ENCODE measurements at regions of chr17 and their contacts with region 1.

Region 1: DNA sequence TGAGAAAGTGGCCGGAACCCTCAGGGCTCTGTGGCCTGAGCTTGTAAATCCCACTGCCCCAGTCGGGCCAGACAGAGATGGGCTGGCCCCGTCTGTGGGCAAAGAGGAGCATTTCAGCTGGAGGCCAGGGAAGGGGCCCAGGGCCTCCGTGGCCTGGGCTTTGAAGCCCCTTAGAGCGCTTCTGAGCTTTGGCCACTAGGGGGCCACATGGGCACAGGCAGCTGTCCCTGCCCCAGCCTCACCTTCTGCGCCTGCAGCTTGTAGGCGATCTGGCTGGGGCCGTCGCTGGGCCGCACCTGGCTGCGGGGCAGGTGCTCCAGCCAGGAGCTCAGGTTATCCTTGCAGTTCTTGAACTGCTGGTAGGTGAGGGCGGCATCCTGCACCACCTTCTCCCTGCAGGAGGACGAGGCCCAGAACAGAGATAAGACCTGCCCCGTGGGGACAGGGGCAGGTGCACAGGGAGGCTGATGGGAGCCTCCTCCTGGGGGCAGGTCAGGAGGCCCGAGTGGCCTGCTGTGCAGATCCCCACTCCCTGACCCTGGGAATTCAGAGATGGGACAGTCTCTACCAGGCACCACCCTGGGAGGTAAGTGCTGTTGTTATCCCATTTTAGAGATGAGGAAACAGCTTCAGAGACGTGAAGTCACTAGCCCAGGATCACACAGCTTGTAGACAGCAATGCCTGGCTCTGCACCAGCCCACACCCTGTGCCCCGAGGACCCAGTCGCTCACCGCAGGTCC is 12.8 kb downstream of the EVPL start:
- DNase-seq: no peak
- H3K4me3 ChIP-seq: no peak overlapping the region
- H3K27me3 ChIP-seq: peaks cover 1% of the 10 kb centered on the region; the same call in 1 of the 2 replicates
- CTCF ChIP-seq: peak; percentile 99

Region 2: DNA sequence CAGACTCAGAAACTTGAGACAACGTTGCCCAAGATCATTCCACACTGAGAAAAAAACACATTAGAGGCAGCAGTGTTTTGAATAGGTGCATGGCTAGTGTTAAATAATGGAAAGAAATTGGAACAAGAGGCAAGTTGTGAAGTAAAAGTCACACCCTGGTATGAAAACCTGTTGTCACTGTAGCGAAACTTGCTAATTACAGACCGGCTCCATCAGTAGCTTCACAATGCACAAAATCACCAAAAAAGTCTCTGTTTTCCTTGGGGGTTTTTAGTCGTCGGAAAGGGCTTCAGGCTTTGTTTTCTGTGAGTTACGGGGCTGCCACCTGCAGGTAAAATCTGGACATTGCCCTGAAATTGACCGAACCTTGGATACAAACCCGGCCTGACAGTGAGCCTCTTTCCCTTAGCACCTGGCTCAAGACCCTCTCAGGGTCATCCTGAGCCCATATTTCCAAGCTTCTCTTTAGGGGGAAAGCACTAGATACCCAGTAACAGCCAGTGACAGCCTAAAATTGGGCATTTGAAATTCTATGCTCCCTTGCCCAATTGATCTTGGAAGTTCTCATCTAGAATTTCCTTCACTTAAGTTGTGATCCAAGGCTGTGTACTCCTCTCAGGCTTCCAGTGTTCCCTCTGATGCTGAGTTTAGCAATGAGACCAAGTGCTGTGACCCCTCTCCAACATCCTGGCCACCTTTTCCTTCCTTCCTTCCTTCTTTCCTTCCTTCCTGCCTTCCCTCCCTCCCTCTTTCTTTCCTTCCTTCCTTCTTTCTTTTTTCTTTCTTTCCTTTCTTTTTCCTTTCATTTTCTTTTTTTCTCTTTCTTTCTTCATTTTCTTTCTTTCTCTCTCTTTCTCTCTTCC is 601.7 kb before region 1 on chr17:
- CTCF ChIA-PET with region 1: no interaction called
- POLR2A ChIA-PET with region 1: no interaction called
- DNase-seq: no peak
- H3K4me3 ChIP-seq: no peak overlapping the region
- H3K27me3 ChIP-seq: peaks cover 6% of the 10 kb centered on the region
- CTCF ChIP-seq: peak; percentile 77

Region 3: DNA sequence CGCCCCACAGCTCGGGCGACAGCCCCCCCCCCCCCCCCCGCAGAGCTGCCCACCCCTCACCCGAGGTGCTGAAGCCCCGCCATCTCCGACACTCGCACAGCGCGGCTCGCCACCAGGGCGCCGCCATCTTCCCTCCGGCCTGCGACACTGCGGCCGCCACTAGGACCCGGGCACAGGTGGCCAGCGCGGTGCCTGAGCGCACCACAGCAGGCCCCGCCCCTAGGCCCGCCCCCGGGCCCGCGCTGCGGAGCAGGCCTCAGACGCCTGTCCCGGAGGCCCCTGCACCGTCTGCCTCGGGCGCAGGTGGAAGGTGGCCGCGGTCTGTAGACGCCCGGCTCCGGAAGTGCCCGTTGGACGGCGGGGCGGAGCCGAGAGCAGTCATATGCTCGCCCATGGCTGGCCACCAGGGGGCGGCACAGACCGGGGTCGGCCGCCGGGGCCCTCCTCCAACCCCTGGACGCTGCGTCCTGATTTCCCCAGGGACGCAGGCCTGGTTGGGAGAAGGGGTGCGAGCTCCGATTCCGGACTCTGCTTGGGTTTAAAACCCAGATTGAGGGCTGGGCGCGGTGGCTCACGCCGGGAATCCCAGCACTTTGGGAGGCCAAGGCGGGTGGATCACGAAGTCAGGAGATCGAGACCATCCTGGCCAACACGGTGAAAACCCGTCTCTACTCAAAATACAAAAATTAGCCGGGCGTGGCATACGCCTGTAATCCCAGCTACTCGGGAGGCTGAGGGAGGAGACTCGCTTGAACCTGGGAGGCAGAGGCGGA is 109.4 kb before region 1 on chr17 and contains the start of gene MRPL38:
- CTCF ChIA-PET with region 1: interaction called, 264 read pairs
- POLR2A ChIA-PET with region 1: no interaction called
- DNase-seq: peak; percentile 62
- H3K4me3 ChIP-seq: peak within 1 kb of the TSS; percentile 91
- H3K27me3 ChIP-seq: no peaks in the 10 kb centered on the region
- CTCF ChIP-seq: peak; percentile 94
- polyA plus RNA-seq, gene MRPL38: 22.7 and 60.9 TPM in 2 replicates

Region 4: GRCh38 chr17:75940724-75941441 is 73.5 kb before region 1 on chr17 and contains the start of gene FBF1:
- CTCF ChIA-PET with region 1: no interaction called
- POLR2A ChIA-PET with region 1: no interaction called
- DNase-seq: peak; percentile 73
- H3K4me3 ChIP-seq: peak within 1 kb of the TSS; percentile 60
- H3K27me3 ChIP-seq: no peaks in the 10 kb centered on the region
- CTCF ChIP-seq: 0 out of 2 replicates have a peak, but pooled peaks have one; percentile 6
- polyA plus RNA-seq, gene FBF1: 3.4 and 4.8 TPM in 2 replicates

Region 5: DNA sequence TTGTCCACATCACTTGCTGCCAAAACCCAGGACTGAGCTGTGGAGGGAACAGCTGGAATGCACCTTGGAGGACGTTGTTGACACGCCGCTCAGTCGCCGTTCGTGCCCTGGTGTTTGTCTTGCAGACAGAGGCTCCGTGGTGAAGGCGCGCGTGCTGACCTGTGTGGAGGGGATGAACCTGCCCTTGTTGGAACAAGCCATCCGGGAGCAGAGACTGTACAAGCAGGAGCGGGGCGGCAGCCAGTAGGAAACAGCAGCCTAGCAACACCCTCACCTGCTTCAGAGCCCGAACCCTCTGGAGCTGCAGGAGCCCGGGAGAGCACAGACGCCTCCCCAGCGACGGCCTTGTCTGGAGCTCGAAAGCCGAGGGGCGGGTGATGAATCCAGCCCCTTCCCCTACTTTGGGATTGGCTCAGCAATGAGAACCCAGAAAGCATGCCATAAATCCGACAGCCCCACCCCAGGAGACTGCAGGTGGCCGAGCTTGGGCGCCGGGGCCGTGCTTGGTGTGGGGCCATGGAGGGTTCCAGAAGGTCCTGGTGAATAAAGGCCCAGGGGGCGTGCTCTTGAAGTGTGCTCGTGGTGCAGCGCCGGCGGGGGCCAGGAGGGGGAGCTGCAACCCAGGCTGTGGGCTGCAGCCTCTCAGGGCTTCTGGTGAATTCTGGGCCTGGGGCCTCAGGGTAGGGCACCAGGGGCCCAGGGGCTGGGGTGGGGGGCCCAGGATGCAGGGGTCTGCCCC is 14.2 kb before region 1 on chr17:
- CTCF ChIA-PET with region 1: interaction called, 81 read pairs
- POLR2A ChIA-PET with region 1: no interaction called
- DNase-seq: no peak
- H3K4me3 ChIP-seq: no peak overlapping the region
- H3K27me3 ChIP-seq: no peaks in the 10 kb centered on the region
- CTCF ChIP-seq: peak; percentile 79

Region 6: DNA sequence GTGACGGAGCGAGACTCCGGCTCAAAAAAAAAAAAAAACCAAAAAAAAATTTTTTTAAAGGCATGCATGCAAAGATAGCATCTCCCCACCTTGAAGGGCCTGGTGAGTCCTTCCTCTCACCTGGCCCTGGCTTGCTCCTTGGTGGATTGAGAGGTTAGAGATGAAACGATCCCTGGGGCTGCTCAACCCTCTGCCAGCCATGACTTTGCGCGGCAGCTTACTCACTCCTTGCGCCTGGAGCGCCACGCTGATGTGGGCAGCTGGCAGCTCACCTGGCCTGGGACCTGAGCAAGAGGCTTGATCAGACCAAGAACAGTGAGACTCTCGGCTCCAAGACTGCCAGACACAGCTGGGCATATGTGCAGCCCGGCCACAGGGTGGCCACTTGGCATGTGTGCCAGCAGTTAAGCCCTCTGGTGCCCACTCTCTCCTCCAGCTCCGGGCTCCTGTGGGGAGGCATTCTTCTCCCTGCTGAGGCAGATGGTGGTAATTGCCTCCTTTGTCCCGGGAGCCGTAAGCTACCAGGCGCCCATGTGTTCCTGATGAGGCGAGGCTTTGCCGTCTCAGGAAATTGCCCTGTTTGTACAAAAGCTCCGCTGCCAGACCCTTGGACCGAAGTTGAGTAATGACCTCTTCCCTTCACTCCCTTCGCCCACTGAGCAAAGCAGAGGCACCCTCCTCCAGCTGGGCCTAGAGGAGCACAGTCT is 17.9 kb after region 1 on chr17:
- CTCF ChIA-PET with region 1: interaction called, 49 read pairs
- POLR2A ChIA-PET with region 1: no interaction called
- DNase-seq: no peak
- H3K4me3 ChIP-seq: no peak overlapping the region
- H3K27me3 ChIP-seq: no peaks in the 10 kb centered on the region
- CTCF ChIP-seq: no peak

Region 7: GRCh38 chr17:76103274-76104139 is 89.2 kb after region 1 on chr17 and contains the start of gene EXOC7:
- CTCF ChIA-PET with region 1: interaction called, 10 read pairs
- POLR2A ChIA-PET with region 1: no interaction called
- DNase-seq: peak; percentile 39
- H3K4me3 ChIP-seq: peak within 1 kb of the TSS; percentile 98
- H3K27me3 ChIP-seq: no peaks in the 10 kb centered on the region
- CTCF ChIP-seq: peak; percentile 24; the same call in 1 of the 2 replicates
- polyA plus RNA-seq, gene EXOC7: 91.7 and 122 TPM in 2 replicates

Region 8: GRCh38 chr17:76296186-76296585 is 281.8 kb after region 1 on chr17:
- CTCF ChIA-PET with region 1: interaction called, 17 read pairs
- POLR2A ChIA-PET with region 1: no interaction called
- DNase-seq: no peak
- H3K4me3 ChIP-seq: no peak overlapping the region
- H3K27me3 ChIP-seq: no peaks in the 10 kb centered on the region
- CTCF ChIP-seq: no peak

Measured in BJ (cell line).